CD8-positive, alpha-beta memory T cell (primary cell): ENCODE measurements at regions of chr12 and their contacts with region 1.

Region 1: DNA sequence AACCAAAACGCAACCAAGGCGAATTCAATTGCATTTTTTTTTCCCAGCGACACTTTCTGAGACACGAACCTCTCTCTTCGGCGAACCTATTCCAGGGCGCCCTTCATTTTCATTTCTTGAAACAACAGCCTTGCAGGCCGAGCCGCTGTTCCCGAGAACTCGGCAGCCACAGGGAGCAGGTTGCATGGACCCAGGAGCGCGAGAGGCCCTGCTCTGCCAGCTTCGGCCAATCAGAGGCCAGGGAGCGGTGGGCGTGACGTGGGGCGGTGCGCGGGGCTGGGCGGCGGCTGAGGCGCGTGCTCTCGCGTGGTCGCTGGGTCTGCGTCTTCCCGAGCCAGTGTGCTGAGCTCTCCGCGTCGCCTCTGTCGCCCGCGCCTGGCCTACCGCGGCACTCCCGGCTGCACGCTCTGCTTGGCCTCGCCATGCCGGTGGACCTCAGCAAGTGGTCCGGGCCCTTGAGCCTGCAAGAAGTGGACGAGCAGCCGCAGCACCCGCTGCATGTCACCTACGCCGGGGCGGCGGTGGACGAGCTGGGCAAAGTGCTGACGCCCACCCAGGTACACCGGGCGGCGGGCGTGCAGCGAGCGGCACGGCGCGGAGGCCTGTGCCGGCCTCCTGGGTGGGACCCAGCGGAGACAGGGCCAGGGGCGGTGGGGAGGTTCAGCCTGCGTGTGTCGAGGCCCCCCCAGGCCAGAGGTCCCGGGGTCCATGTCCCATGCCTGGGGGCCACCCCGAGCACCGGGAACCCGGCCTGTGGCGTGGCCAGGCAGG is at the start of gene PEBP1:
- DNase-seq: peak; percentile 87 to 92 (median 91)
- H3K4me3 ChIP-seq: peak within 1 kb of the TSS; percentile 77
- H3K4me3 Mint-ChIP-seq: peak within 1 kb of the TSS; percentile 90 to 98 (median 97)
- H3K27ac ChIP-seq: peak within 1 kb of the TSS; percentile 79
- H3K27ac Mint-ChIP-seq: peak within 1 kb of the TSS; percentile 88 to 96 (median 93)
- H3K4me1 ChIP-seq: peaks cover 12% of the 10 kb centered on the region
- H3K4me1 Mint-ChIP-seq: peaks cover 25 to 48% (median 46%) of the 10 kb centered on the region in 3 donors
- H3K27me3 ChIP-seq: no peaks in the 10 kb centered on the region
- H3K27me3 Mint-ChIP-seq: no peaks in the 10 kb centered on the region
- total RNA-seq, gene PEBP1: 140 to 142 TPM

Region 2: DNA sequence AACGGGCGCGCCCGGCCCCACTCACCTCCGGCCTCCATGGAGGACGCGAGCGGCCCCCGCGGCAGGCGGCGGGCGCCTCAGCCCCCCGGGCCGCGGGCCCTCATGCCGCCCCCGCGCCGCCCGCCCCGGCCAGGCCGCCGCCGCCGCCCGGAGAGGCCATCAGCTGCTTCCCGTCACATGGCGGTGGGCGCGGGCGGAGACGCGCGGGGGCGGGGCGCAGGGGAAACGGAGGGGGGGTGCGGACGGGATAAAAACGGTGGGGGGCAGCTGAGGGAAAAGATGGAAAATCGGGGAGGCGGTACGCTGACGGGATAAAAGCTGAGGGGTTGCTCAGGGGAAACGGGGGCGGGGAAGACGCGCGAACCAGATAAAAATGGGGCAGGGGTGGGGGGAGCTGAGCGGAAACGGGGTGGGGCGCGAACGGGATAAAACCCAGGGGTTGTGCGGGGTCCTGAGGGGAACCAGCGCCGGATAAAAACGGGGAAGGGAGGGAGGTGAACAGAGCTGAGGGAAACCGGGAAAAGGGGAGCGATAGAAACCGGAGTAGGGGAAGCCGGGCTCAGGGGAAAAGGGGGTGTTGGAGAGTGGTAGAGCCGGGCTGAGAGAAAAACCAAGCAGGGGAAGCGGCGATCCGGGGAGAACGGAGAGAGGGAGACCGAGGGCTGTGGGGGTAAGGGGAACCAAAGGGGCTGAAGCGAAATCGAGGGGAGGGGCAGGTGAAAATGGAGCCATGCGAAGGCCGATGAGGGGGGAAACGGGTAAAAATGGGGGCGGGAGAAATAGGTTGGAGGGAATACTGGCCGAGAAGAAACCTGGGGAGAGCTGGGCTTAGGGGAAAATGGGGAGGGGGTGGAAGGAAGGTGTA is 74.7 kb before region 1 on chr12 and contains the start of gene WSB2:
- CTCF ChIA-PET with region 1: interaction called, 4 read pairs
- POLR2A ChIA-PET with region 1: interaction called, 11 read pairs
- DNase-seq: peak; percentile 40 to 74 (median 46)
- H3K4me3 ChIP-seq: peak within 1 kb of the TSS; percentile 76
- H3K4me3 Mint-ChIP-seq: peak within 1 kb of the TSS; percentile 91 to 100 (median 94)
- H3K27ac ChIP-seq: peak within 1 kb of the TSS; percentile 87
- H3K27ac Mint-ChIP-seq: peak within 1 kb of the TSS; percentile 95 to 99 (median 97)
- H3K4me1 ChIP-seq: peaks cover 40% of the 10 kb centered on the region
- H3K4me1 Mint-ChIP-seq: peaks cover 49 to 69% (median 61%) of the 10 kb centered on the region in 3 donors
- H3K27me3 ChIP-seq: no peaks in the 10 kb centered on the region
- H3K27me3 Mint-ChIP-seq: peaks cover 0 to 6% of the 10 kb centered on the region in 2 donors
- total RNA-seq, gene WSB2: 74.2 to 84.4 TPM

Region 3: DNA sequence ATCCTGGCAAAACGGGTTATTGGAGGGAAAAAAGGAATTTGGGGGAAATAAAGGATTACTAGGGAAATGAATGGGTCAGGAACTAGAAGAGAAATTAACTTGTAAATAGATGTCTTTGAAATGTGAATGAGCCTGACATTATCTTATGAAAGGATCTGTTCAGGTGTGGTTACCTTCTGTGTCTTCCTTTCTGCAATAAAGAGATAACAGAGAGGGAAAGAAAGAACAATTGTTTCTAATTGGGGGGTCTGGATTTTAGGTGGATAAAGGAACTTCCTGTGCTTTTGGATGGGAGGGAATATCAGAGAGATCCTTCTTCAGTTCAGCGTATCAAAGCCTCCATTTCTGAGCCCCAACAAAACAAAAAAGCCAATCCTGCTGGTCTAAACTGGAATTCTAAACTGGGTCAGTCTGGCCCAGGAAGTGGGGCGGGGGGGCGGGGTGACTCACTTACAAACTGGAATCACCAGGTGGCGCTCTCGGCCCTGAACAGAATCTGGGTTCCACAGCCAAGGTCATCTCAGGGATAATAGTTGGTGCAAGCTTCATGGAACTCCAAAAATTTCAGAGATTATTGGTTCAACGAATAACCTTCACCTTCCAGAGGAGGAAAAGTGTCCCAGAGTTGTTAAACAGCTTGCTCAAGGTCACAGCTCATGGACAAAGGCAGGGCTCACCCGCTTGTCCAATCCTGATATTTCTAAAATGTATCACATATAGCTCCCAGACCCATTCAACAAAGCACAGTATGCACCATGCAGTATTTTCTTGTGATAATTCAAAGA is 15.2 kb before region 1 on chr12:
- CTCF ChIA-PET with region 1: interaction called, 25 read pairs
- POLR2A ChIA-PET with region 1: interaction called, 8 read pairs
- DNase-seq: peak; percentile 28 to 68 (median 52)
- H3K4me3 ChIP-seq: no peak overlapping the region
- H3K4me3 Mint-ChIP-seq: peak overlapping the region in 2 of 7 donors; percentile 46 to 62
- H3K27ac ChIP-seq: peak overlapping the region; percentile 40
- H3K27ac Mint-ChIP-seq: peak overlapping the region; percentile 26 to 98 (median 88)
- H3K4me1 ChIP-seq: peaks cover 4% of the 10 kb centered on the region
- H3K4me1 Mint-ChIP-seq: peaks cover 7 to 14% (median 9%) of the 10 kb centered on the region in 3 donors
- H3K27me3 ChIP-seq: no peaks in the 10 kb centered on the region
- H3K27me3 Mint-ChIP-seq: peaks cover 0 to 1% of the 10 kb centered on the region in 2 donors

Region 4: DNA sequence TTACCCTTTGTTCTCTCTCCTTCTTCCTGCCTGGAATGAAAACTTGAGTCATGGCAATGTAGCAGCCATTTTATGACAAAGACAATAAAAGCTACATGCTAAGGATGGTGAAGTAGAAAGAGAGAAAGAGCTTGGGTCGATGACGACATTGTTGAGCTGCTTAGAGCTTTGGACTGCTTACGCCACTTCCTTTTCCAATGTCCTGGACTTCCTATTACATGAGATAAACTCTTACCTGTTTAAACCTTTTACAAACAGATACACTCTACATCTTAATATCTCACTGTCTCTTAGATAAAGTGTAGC is 70.1 kb after region 1 on chr12:
- CTCF ChIA-PET with region 1: no interaction called
- POLR2A ChIA-PET with region 1: no interaction called
- DNase-seq: no peak
- H3K4me3 ChIP-seq: no peak overlapping the region
- H3K4me3 Mint-ChIP-seq: no peak overlapping the region
- H3K27ac ChIP-seq: no peak overlapping the region
- H3K27ac Mint-ChIP-seq: peak overlapping the region in 4 of 8 donors; percentile 23 to 86 (median 56)
- H3K4me1 ChIP-seq: no peaks in the 10 kb centered on the region
- H3K4me1 Mint-ChIP-seq: no peaks in the 10 kb centered on the region
- H3K27me3 ChIP-seq: no peaks in the 10 kb centered on the region
- H3K27me3 Mint-ChIP-seq: no peaks in the 10 kb centered on the region